Tibial artery (tissue), 4 donors: ENCODE measurements at regions of chr5 and their contacts with region 1.

Region 1: DNA sequence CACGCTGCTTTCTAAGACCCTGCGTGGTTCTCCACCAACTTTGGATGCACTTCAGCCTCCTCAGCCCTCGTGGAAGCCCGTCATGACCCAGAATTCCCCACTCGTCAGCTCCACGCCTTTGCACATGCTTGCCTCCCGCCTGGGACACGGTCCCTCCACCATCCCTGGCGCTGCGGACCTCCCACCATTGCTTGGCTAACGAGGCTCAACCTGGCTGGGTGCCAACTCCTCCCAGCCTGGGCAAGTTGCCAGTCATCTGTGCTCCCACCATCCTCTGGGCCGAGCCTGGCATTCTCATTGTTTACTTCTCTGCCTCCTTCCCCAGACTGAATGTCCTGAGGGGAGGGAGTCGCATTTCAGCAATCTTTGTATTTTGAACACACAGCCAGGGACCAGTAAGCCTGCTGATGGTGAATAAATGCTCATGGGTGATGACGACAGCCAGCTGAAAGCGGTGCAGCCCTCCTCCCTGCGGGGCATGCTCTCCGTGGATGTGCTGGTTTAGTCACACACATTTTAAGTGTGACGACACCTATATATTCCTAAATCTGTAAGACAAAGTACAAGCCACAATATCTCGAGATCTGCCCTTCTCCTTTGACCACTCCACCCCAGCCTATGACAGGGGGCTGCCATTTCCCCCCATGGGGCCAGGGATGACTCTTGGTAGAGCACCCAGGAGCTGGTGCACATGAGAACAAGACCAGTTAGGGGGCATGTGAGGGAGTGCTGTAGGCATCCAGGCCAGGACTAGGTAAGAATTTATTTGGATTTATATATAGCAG is 37.6 kb downstream of the ANKRD33B start:
- DNase-seq: peak; percentile 88 to 96
- H3K4me3 ChIP-seq: peak overlapping the region; percentile 11 to 13
- H3K27ac ChIP-seq: peak overlapping the region; percentile 70 to 78
- H3K4me1 ChIP-seq: peaks cover 0 to 25% (median 18%) of the 10 kb centered on the region in 4 donors
- H3K27me3 ChIP-seq: no peaks in the 10 kb centered on the region
- CTCF ChIP-seq: no peak

Region 2: DNA sequence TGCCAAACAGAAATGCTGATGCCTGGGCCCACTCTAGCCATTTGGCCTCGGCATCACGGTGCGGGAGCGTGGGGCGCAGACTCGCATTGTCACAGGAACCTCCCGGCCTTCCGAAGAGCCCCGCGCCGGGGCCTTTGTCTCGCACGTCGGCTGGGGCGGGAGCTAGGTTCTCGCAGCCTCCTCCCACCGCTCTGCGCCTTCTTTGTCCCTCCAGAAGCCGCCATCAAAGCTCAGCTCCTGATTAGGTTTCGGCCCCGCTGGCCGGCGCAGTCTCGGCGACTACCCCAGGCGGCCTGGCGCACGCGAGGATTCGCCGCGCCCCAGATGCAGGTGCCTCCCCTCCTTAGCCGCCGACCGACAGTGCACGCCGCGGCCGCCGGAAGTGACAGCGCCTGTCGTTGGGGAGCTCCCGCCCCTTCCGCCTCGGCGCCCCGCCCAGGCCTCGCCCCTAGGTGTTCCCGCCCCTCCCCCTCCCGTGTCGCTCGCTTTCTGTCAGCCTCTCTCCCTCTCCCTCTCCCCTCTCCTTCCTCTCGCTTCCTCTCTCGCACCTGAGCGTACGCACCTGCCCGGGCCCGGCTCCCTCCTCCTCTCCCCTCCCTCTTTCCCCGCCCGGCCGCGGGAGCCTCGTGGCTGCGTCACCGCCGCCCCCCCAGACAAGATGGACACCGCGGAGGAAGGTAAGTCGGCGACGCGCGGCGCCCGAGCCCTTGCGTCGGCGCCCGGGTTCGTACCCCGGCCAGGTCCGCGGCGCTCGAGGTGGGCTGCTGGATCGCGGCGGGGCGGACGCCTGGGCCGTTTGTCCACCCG is 248.0 kb before region 1 on chr5 and contains the start of gene MARCHF6:
- intact Hi-C with region 1: loop called (anchors 10 kb)
- DNase-seq: peak; percentile 94 to 96
- H3K4me3 ChIP-seq: peak within 1 kb of the TSS; percentile 79 to 82
- H3K27ac ChIP-seq: peak within 1 kb of the TSS; percentile 88 to 91
- H3K4me1 ChIP-seq: peaks cover 0 to 43% (median 11%) of the 10 kb centered on the region in 4 donors
- H3K27me3 ChIP-seq: no peaks in the 10 kb centered on the region
- CTCF ChIP-seq: no peak

Region 3: GRCh38 chr5:10563945-10564837 is 37.2 kb before region 1 on chr5 and contains the start of gene ANKRD33B:
- intact Hi-C with region 1: loop called (anchors 5 kb)
- DNase-seq: peak; percentile 49 to 77
- H3K4me3 ChIP-seq: peak within 1 kb of the TSS; percentile 63 to 67
- H3K27ac ChIP-seq: peak within 1 kb of the TSS; percentile 57 to 77
- H3K4me1 ChIP-seq: peaks cover 0 to 55% (median 29%) of the 10 kb centered on the region in 4 donors
- H3K27me3 ChIP-seq: peaks cover 0 to 19% of the 10 kb centered on the region in 2 donors
- CTCF ChIP-seq: no peak